Heart right ventricle (tissue), 16 donors: ENCODE measurements at regions of chr17 and their contacts with region 1.

Region 1: GRCh38 chr17:32006957-32007462 is at the start of gene LRRC37B:
- DNase-seq: peak; percentile 87 to 90
- ATAC-seq: peak; percentile 98 to 99 (median 99)
- H3K4me3 ChIP-seq: peak within 1 kb of the TSS; percentile 65 to 85 (median 76)
- H3K27ac ChIP-seq: peak within 1 kb of the TSS in 9 of 10 donors; percentile 75 to 94 (median 85)
- H3K4me1 ChIP-seq: peaks cover 3 to 33% (median 24%) of the 10 kb centered on the region in 9 donors
- H3K27me3 ChIP-seq: no peaks in the 10 kb centered on the region
- CTCF ChIP-seq: peak; percentile 96 to 99 (median 98)
- total RNA-seq, gene LRRC37B: 3.1 to 4.7 (median 3.8) TPM

Region 2: GRCh38 chr17:31967648-31968047 is 39.4 kb before region 1 on chr17:
- intact Hi-C with region 1: no loop called
- DNase-seq: no peak
- ATAC-seq: no peak
- H3K4me3 ChIP-seq: no peak overlapping the region
- H3K27ac ChIP-seq: no peak overlapping the region
- H3K4me1 ChIP-seq: no peaks in the 10 kb centered on the region
- H3K27me3 ChIP-seq: no peaks in the 10 kb centered on the region
- CTCF ChIP-seq: no peak

Region 3: GRCh38 chr17:32136856-32137255 is 129.8 kb after region 1 on chr17:
- intact Hi-C with region 1: loop called in 8 of 10 experiments (anchors 5 kb)
- DNase-seq: no peak
- ATAC-seq: no peak
- H3K4me3 ChIP-seq: no peak overlapping the region
- H3K27ac ChIP-seq: no peak overlapping the region
- H3K4me1 ChIP-seq: peaks cover 0 to 24% (median 15%) of the 10 kb centered on the region in 9 donors
- H3K27me3 ChIP-seq: no peaks in the 10 kb centered on the region
- CTCF ChIP-seq: no peak

Region 4: DNA sequence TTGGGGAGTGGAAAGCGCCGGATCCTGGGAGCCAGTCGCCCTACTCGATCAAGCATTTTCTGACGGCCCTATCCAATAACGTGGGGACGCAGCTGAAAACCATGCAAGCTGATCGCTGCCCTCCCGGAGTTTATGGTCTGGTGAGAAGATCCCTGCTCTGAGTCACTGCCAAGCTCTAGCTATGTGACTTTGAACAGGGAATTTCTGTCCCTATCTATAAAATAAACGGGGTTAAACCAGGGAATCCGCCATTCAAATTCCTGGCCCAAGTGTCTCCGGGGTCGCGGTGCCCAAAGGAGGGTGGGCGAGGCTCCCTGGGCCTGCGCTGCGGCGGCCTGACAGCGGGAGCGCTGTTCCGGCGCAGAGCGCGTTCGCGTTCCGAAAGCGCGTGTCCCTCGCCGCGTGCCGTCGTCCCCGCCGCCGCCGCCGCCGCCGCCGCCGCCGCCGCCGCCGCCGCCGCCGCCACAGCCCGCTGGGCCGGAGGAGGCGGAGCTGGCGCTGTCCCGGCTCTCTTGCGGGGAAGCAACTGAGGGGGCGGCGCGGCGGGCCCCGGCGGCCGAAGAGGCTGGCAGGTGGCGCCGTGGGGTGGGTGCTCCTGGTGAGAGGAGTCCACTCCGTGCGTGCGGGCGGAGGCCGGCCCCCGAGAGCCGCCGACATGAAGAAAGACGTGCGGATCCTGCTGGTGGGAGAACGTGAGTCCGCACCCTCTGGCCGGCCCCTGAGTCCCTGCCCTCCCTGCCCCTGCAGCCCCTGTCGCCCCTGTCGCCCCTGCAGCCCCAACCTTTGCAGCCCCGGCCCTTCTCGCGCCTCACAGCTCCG is 135.2 kb after region 1 on chr17 and contains the start of gene RHOT1:
- intact Hi-C with region 1: loop called in 8 of 10 experiments (anchors 5 kb)
- DNase-seq: peak; percentile 68 to 83
- ATAC-seq: peak; percentile 68 to 82 (median 78)
- H3K4me3 ChIP-seq: peak within 1 kb of the TSS; percentile 80 to 97 (median 90)
- H3K27ac ChIP-seq: peak within 1 kb of the TSS; percentile 86 to 98 (median 96)
- H3K4me1 ChIP-seq: peaks cover 5 to 55% (median 38%) of the 10 kb centered on the region in 9 donors
- H3K27me3 ChIP-seq: no peaks in the 10 kb centered on the region
- CTCF ChIP-seq: peak; percentile 49 to 77 (median 64)
- total RNA-seq, gene RHOT1: 45.2 to 72.2 (median 48.5) TPM